ENCODE measurements at regions of chr6 and their contacts with region 1.

Region 1: DNA sequence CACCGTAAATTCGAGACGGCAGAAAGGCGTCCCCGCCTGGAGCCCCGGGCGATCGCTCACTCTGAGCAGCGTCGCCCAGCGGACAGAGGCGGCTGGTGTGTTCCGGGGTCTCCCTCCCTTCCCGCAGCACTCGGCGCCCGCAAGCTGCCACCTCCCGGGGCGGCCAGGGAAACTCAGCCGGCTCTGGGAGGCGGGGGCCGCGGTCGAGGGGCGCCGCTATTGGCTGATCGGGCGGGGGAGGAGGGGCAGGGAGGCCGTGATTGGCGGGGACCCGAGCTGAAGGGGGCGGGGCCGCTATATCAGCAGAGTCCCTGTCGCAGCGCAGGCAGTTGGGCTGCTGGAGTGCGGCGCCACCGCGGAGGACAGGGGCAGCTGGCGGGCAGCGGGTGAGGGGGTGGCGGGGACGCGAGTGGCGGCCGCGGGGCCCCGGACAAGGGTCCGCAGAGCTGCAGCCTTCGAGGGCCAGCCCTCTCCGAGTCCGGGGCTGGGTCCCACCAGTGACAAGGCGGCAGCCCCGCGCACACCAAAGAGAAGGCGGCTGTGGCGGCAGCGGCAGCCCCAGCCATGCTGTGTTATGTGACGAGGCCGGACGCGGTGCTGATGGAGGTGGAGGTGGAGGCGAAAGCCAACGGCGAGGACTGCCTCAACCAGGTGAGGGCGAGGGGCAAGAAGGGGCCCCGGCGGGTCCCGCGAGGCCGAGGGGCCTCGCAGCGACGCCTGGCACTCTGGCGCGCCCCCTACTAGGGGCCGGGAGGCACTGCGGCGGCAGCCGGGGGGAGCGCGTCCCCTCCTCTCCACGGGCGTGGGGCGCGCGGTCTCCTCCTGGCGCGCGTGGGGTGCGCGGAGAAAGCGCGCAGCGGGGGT is at the start of gene MYLIP:
- DNase-seq: peak; percentile 98
- H3K4me3 ChIP-seq: peak within 1 kb of the TSS; percentile 100
- H3K27ac ChIP-seq: peak within 1 kb of the TSS; percentile 97 to 98
- H3K4me1 ChIP-seq: peaks cover 8% of the 10 kb centered on the region
- H3K27me3 ChIP-seq: no peaks in the 10 kb centered on the region
- CTCF ChIP-seq: peak; percentile 52 to 92 (median 67)
- POLR2A ChIP-seq: peak; percentile 100
- total RNA-seq, gene MYLIP: 39.6 to 58.1 TPM

Region 2: DNA sequence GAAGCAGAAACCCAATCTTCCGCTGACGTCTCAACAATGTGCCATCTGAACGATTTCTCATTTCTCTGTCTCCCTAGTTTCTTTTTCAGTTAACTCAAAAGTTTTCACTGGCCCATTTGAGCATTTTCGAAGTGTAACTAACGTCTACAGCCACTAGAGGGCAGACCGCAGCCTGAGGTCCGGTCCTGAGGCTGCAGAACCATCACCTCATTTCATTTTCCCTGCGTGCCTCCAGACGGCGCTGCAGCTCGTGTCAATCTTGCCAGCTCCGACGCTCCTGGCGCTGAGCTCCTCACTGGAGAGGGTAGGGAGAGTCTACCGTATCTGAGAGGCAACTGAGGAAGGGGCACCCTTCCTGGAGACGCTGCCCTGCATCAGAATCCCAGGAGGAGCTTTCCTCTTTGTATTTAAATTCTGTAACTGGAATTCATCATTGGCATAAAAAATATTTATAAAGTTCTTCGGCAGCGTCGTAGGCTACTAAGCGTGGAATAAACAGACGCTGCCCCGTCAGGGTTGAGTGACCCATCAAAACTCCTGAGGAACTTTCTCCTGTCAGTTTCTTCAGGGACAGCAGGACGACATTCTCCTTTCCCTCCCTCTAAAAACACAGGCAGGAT is 437.6 kb before region 1 on chr6:
- intact Hi-C with region 1: loop called (anchors 1 kb)
- DNase-seq: peak; percentile 77
- H3K4me3 ChIP-seq: no peak overlapping the region
- H3K27ac ChIP-seq: no peak overlapping the region
- H3K4me1 ChIP-seq: no peaks in the 10 kb centered on the region
- H3K27me3 ChIP-seq: no peaks in the 10 kb centered on the region
- CTCF ChIP-seq: peak; percentile 87 to 100 (median 99)
- POLR2A ChIP-seq: no peak

Region 3: DNA sequence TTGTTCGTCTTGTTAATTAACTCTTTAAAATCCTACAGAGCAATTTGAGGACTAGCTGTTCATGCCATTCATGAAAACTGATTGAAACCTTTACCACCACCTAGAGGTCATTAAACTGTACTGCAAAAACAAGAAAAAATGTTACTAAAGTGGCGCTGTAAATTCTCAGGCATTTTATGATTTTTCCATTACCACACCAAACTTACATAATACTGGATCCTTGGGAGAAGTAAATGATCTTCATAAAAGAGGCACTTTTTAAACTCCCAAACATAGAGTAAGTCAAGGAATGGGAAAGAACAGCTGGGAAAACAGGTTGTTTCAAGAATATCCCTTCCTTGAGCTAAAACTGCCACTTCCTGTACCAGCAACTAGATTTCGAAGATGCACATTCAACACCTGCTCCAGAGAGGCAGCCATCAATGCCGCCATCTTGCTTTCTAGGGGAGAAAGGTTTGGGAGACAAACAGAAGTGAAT is 54.2 kb after region 1 on chr6:
- intact Hi-C with region 1: loop called (anchors 10 kb)
- DNase-seq: no peak
- H3K4me3 ChIP-seq: no peak overlapping the region
- H3K27ac ChIP-seq: no peak overlapping the region
- H3K4me1 ChIP-seq: no peaks in the 10 kb centered on the region
- H3K27me3 ChIP-seq: no peaks in the 10 kb centered on the region
- CTCF ChIP-seq: peak; percentile 55 to 83 (median 83)
- POLR2A ChIP-seq: no peak

Region 4: DNA sequence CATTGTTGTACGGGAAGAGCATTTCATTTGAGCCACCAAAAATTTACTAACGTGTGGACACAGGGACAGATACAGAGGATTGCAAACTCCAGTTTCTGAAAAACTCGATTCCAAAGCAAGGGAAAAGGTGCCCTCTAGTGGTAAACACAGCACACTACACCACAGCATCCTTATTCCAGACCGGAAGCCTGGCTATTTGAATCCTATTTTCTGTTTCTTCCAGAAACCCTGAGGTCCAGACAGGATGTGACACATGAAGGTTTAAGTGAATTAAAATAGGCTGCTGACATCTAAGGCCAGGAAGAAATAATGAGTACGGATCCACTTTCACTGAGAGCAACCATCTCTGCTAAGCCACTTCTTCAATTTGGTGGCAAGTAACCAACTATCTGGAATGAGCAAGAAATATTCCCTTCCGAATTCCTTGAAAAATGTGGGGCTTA is 77.6 kb after region 1 on chr6:
- intact Hi-C with region 1: loop called (anchors 5 kb)
- DNase-seq: peak; percentile 64
- H3K4me3 ChIP-seq: no peak overlapping the region
- H3K27ac ChIP-seq: no peak overlapping the region
- H3K4me1 ChIP-seq: no peaks in the 10 kb centered on the region
- H3K27me3 ChIP-seq: no peaks in the 10 kb centered on the region
- CTCF ChIP-seq: peak; percentile 78 to 93 (median 92)
- POLR2A ChIP-seq: no peak